Heart right ventricle (tissue), 16 donors: ENCODE measurements at regions of chr16 and their contacts with region 1.

Region 1: DNA sequence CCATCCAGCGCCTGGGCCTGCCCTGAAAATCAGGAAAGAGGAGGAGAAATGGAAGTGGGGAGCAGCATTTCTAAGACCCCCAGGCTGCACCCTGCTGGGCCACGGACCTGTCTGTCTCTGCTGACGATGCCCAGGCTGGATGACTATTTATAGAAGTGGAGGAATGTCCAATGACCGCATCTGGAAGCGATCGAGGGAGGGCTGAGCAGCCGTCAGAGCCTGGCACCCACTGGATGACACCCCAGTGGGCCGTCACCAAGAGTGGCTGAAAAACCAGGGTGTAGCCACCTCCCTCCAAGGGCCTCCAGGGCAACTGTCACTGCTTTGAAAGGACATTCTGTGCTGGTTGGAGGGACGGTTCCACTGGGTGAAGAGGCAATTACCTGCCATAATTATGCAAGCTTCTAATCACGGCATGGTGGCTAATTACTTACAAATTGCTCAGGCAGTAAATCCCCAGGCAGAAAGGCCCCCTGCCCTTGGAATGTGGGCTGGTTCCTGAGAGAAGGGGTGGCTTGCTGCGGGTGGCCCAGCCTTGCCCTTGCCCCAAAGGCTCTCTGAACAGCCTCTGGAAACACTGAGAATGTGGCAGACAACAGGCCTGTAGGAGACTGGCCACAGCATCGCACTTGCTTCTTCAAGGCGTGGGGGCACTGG is 332.1 kb downstream of the C16orf95 start:
- DNase-seq: peak; percentile 60 to 77
- ATAC-seq: peak; percentile 87 to 97 (median 93)
- H3K4me3 ChIP-seq: no peak overlapping the region
- H3K27ac ChIP-seq: peak overlapping the region in 8 of 10 donors; percentile 41 to 88 (median 70)
- H3K4me1 ChIP-seq: peaks cover 0 to 18% (median 4%) of the 10 kb centered on the region in 9 donors
- H3K27me3 ChIP-seq: no peaks in the 10 kb centered on the region
- CTCF ChIP-seq: no peak

Region 2: DNA sequence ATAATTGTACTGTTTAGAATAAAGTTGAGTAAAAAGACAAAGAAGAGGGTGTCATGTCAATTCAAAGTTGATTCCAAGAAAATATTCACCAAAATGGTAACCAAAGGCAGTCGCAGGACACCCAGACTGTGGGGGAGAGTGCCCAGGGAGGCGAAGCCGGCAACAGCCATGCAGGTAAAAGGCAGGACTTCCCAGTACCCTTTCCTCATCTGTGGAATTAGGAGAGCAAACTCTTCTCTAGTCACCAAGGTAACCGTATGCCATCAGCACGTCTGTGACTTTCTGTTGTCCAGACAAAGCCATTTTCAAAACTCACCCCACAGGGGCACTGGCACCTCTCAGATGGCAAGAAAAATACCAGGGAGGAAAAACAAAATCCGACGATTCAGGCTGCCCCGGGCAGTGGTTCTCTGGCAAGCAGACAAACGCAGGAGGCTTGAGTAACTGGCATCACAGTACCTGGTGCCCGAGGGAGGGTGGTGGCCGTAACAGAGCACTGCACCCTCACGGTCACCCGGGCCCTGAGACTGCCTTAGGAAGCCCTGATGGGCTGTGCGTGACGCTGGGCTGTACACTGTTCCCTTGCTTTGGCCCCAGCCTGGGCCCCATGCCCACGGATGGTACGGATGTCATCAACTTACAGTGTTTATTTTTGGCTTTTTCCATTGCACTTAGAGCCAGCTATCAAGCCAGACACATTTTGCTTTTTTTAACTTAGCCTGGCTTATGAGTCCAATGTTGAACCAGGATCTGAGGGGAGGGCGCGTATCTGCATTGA is 119.4 kb before region 1 on chr16:
- intact Hi-C with region 1: loop called in 2 of 10 experiments (anchors 5 to 10 kb)
- DNase-seq: peak; percentile 84 to 86
- ATAC-seq: peak; percentile 94 to 99 (median 98)
- H3K4me3 ChIP-seq: peak overlapping the region in 1 of 10 donors; percentile 13
- H3K27ac ChIP-seq: peak overlapping the region; percentile 53 to 95 (median 88)
- H3K4me1 ChIP-seq: peaks cover 0 to 20% (median 5%) of the 10 kb centered on the region in 9 donors
- H3K27me3 ChIP-seq: peaks cover 0 to 3% (median 0%) of the 10 kb centered on the region in 7 donors
- CTCF ChIP-seq: peak in 5 of 9 donors; percentile 7 to 45 (median 41)

Region 3: GRCh38 chr16:87033541-87034300 is 48.6 kb after region 1 on chr16:
- intact Hi-C with region 1: loop called in 1 of 10 experiments (anchors 2 kb)
- DNase-seq: peak in 1 of 2 donors; percentile 53
- ATAC-seq: peak in 7 of 8 donors; percentile 50 to 87 (median 80)
- H3K4me3 ChIP-seq: no peak overlapping the region
- H3K27ac ChIP-seq: peak overlapping the region in 7 of 10 donors; percentile 20 to 76 (median 58)
- H3K4me1 ChIP-seq: peaks cover 0 to 25% (median 18%) of the 10 kb centered on the region in 9 donors
- H3K27me3 ChIP-seq: no peaks in the 10 kb centered on the region
- CTCF ChIP-seq: no peak